ENCODE measurements at regions of chr19 and their contacts with region 1.

Region 1: GRCh38 chr19:12484371-12485051 is at the start of gene ZNF709:
- DNase-seq: peak; percentile 63 to 94
- H3K4me3 ChIP-seq: peak within 1 kb of the TSS; percentile 86 to 98
- H3K27ac ChIP-seq: peak within 1 kb of the TSS; percentile 74 to 76
- H3K4me1 ChIP-seq: peaks cover 0 to 15% of the 10 kb centered on the region in 2 donors
- H3K27me3 ChIP-seq: no peaks in the 10 kb centered on the region
- CTCF ChIP-seq: no peak
- total RNA-seq, gene ZNF709: 3.4 TPM

Region 2: GRCh38 chr19:12440541-12441316 is 43.8 kb before region 1 on chr19 and contains the start of gene ZNF443:
- intact Hi-C with region 1: loop called (anchors 1 kb)
- DNase-seq: peak; percentile 99
- H3K4me3 ChIP-seq: peak within 1 kb of the TSS; percentile 77 to 81
- H3K27ac ChIP-seq: peak within 1 kb of the TSS; percentile 80 to 81
- H3K4me1 ChIP-seq: no peaks in the 10 kb centered on the region
- H3K27me3 ChIP-seq: no peaks in the 10 kb centered on the region
- CTCF ChIP-seq: peak in 1 of 3 experiments; percentile 17
- total RNA-seq, gene ZNF443: 4.0 TPM

Region 3: GRCh38 chr19:12544401-12544876 is 59.9 kb after region 1 on chr19:
- intact Hi-C with region 1: no loop called
- DNase-seq: no peak
- H3K4me3 ChIP-seq: no peak overlapping the region
- H3K27ac ChIP-seq: no peak overlapping the region
- H3K4me1 ChIP-seq: peaks cover 0 to 4% of the 10 kb centered on the region in 2 donors
- H3K27me3 ChIP-seq: no peaks in the 10 kb centered on the region
- CTCF ChIP-seq: no peak

Region 4: DNA sequence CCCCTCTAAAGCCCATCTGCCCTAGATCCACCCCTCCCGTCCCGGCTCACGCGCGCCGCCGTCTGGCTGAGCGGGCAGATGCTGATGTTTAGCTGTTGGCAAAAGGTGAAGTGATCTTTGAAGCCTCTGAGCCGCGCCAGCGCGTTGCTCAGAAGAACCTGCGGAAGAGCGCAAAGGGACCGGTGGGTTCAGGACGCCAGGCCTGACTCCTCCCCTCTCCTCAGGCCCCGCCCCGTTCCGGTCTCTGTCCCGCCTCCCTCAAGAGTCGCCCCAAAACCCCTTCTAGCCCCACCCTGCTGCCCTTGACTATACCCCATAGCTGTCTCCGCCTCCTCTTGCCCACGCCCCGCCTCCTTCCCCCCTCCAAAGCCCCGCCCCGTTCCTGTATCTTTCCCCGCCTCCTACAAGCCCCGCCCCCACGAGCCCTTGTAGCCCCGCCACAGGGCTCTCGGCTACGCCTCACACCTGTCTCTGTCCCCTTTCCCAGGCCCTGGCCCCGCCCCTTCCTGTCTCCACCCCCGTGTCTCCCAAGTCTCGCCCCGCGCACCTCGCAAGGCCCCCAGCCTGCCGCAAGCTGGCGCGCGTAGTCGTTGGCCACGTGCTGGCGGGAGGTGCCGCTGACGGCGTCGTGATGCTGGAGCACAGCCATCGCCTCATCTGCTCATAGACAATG is 172.5 kb after region 1 on chr19:
- intact Hi-C with region 1: no loop called
- DNase-seq: no peak
- H3K4me3 ChIP-seq: no peak overlapping the region
- H3K27ac ChIP-seq: no peak overlapping the region
- H3K4me1 ChIP-seq: no peaks in the 10 kb centered on the region
- H3K27me3 ChIP-seq: no peaks in the 10 kb centered on the region
- CTCF ChIP-seq: no peak

Measured in ascending aorta (tissue), 2 donors.